ENCODE measurements at regions of chr1 and their contacts with region 1.

Region 1: GRCh38 chr1:202957733-202958543 is at the start of gene ADIPOR1:
- DNase-seq: peak; percentile 89 to 95
- ATAC-seq: peak; percentile 96 to 99 (median 96)
- H3K4me3 ChIP-seq: peak within 1 kb of the TSS; percentile 74
- H3K4me3 Mint-ChIP-seq: peak within 1 kb of the TSS; percentile 86
- H3K27ac ChIP-seq: peak within 1 kb of the TSS; percentile 82
- H3K27ac Mint-ChIP-seq: peak within 1 kb of the TSS; percentile 85 to 90
- H3K4me1 ChIP-seq: peaks cover 13% of the 10 kb centered on the region
- H3K4me1 Mint-ChIP-seq: peaks cover 23 to 37% of the 10 kb centered on the region in 2 donors
- H3K27me3 ChIP-seq: no peaks in the 10 kb centered on the region
- H3K27me3 Mint-ChIP-seq: no peaks in the 10 kb centered on the region
- CTCF ChIP-seq: no peak
- total RNA-seq, gene ADIPOR1: 61.9 to 81.7 (median 80.6) TPM

Region 2: DNA sequence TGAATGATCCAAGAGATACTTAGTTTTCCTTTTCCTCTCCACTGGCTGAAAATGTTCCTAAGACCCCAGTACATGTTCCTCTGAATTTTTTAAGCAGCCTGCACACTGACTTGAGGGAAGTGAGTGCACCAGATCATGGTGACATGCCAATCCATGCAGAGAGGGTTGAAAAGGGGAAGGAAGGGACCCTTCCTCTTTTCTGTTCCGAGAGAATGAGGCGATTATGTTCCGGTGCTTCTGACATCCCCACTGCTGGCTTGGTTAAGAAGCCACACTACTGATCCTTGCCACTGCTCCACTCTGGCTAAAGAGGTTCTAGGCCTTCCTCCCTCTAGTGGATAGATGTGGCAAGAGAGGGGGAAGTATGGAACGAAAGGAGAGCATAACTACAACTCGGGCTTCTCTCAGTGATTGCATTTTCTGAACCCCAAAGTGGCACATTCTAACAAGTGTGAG is 10.9 kb after region 1 on chr1:
- intact Hi-C with region 1: loop called (anchors 1 kb)
- DNase-seq: peak in 1 of 2 donors; percentile 66
- ATAC-seq: peak; percentile 13 to 62 (median 23)
- H3K4me3 ChIP-seq: no peak overlapping the region
- H3K4me3 Mint-ChIP-seq: peak overlapping the region; percentile 55
- H3K27ac ChIP-seq: no peak overlapping the region
- H3K27ac Mint-ChIP-seq: peak overlapping the region in 1 of 2 donors; percentile 73
- H3K4me1 ChIP-seq: peaks cover 30% of the 10 kb centered on the region
- H3K4me1 Mint-ChIP-seq: peaks cover 25 to 27% of the 10 kb centered on the region in 2 donors
- H3K27me3 ChIP-seq: no peaks in the 10 kb centered on the region
- H3K27me3 Mint-ChIP-seq: peaks cover 0 to 5% of the 10 kb centered on the region in 2 donors
- CTCF ChIP-seq: peak; percentile 16